WTC11 (cell line): ENCODE measurements at regions of chr11 and their contacts with region 1.

Region 1: DNA sequence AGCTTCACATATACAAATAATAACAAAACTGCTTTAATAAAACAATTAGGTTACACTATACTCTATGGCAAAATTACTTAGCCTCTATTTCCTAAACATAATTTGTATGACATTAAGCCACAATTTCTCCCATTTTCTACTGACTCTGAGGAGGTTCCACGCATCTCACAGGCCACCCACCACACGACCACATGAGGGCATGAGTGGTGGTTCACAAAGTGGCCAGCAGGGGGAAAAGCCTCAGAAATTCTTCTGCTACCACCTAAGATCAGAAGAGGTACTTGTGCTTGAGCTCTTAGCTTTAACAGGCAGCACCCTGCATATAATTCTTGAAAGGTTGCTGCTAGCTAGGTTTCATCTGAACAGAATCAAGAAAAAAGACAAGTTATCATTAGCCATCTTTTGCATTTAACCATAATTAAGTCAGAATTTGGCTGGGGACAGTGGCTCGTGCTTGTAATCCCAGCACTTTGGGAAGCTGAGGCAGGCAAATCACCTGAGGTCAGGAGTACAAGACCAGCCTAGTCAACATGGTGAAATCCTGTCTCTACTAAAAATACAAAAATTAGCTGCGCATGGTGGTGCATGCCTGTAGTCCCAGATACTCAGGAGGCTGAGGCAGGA is 7.7 kb downstream of the LPXN start:
- DNase-seq: peak; percentile 69
- ATAC-seq: peak; percentile 88
- H3K4me3 Mint-ChIP-seq: no peak overlapping the region
- H3K27ac Mint-ChIP-seq: no peak overlapping the region
- H3K4me1 Mint-ChIP-seq: no peaks in the 10 kb centered on the region
- H3K27me3 Mint-ChIP-seq: no peaks in the 10 kb centered on the region
- CTCF ChIP-seq: peak; percentile 73

Region 2: DNA sequence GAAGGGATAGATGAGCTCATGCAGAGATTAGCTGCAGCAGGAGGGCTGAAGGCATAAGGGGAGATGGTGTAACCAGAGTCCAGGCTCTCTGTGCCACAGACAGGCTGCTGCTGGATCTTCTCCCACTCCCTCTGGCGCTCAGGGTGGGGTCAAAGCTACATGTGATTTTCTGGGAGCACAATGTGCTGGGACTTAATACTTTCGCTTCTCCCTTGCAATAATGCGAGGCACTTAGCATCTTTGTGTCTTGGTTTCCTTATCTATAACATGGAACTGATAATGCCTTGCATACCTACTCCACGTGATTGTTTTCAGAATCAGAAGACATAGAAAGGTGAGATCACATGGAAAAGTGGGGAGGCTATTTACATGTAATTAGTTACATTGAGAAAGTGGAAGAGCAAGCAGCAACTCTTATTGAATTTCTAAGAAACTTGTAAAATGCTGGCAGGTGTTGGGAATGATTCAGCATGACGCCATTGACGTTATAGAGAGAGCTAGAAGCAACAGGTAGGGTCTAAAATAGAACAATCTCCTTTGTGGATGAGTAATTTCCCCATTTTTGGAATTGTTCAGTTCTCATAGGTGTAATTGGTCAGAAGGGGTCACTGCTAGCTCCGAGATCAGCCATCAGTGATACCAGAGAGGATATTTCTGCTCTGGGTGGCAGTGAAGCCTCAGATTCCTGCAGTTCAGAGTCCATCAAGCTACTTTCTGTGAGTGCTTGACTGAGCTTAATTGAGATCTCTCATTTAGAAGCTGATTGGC is 434.5 kb before region 1 on chr11:
- CTCF ChIA-PET with region 1: no interaction called
- POLR2A ChIA-PET with region 1: no interaction called
- DNase-seq: no peak
- ATAC-seq: peak; percentile 46
- H3K4me3 Mint-ChIP-seq: no peak overlapping the region
- H3K27ac Mint-ChIP-seq: no peak overlapping the region
- H3K4me1 Mint-ChIP-seq: peaks cover 4% of the 10 kb centered on the region; the same call in 1 of the 2 replicates
- H3K27me3 Mint-ChIP-seq: no peaks in the 10 kb centered on the region
- CTCF ChIP-seq: no peak

Region 3: DNA sequence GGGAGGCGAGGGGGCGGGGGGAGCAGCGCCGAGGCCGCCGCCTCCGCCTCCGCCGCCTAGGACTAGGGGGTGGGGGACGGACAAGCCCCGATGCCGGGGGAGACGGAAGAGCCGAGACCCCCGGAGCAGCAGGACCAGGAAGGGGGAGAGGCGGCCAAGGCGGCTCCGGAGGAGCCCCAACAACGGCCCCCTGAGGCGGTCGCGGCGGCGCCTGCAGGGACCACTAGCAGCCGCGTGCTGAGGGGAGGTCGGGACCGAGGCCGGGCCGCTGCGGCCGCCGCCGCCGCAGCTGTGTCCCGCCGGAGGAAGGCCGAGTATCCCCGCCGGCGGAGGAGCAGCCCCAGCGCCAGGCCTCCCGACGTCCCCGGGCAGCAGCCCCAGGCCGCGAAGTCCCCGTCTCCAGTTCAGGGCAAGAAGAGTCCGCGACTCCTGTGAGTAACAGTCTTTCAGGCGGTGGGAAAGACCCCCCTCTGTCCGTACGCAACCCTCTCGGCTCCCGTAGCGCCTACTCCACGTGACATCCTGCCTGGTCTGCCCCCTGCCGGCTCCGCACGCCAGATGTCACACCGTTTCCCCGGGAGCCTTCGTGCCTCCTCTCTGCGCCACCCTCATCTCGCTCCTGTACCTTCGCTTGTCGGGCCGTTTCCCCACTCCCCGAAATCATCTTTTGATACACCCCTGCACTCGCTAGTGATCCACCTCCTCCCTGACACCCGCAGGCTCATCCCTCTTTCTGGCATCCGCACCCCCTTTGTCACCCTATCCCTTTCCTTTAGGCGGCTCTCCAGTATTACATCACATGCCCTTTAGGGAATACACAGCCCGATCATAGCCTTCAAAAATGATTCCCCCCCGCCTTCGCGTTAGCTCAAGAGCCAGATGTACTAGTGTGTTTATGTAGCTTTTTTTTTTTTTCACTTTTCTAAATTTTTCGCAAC is 11.5 kb after region 1 on chr11:
- CTCF ChIA-PET with region 1: interaction called, 37 read pairs
- POLR2A ChIA-PET with region 1: no interaction called
- DNase-seq: peak; percentile 83
- ATAC-seq: peak; percentile 13
- H3K4me3 Mint-ChIP-seq: peak overlapping the region; percentile 96
- H3K27ac Mint-ChIP-seq: peak overlapping the region; percentile 98
- H3K4me1 Mint-ChIP-seq: peaks cover 38% of the 10 kb centered on the region
- H3K27me3 Mint-ChIP-seq: no peaks in the 10 kb centered on the region
- CTCF ChIP-seq: 0 out of 2 replicates have a peak, but pooled peaks have one; percentile 24

Region 4: DNA sequence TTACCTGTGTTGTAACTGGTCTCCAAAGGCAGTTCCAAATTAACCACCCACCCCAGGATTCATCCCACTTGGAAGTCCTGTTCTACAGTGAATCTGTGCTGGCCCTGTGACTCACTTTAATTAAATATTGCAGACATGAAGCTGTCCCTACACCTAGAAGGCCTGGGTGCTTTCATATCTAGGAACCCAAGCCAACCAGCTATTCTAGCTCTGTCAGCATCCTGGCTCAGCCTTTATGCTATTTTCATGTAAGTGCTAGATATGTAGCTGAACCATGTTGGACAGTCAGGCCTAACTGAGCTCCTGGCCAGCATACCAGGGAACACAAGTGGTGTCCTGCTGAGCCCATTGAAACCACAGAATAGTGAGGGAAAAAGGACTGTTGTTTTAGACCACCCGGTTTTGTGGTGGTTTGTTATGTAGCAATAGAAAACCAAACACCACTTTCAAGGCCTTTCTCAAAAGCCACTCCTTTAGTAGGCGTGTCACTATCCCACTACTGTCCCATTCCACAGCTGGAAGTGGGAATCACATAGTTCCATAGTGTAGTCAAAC is 84.8 kb after region 1 on chr11:
- CTCF ChIA-PET with region 1: no interaction called
- POLR2A ChIA-PET with region 1: no interaction called
- DNase-seq: no peak
- ATAC-seq: peak; percentile 15
- H3K4me3 Mint-ChIP-seq: no peak overlapping the region
- H3K27ac Mint-ChIP-seq: 0 out of 2 replicates have a peak overlapping the region, but pooled peaks have one; percentile 14
- H3K4me1 Mint-ChIP-seq: peaks cover 26% of the 10 kb centered on the region
- H3K27me3 Mint-ChIP-seq: no peaks in the 10 kb centered on the region; the same call in 1 of the 2 replicates
- CTCF ChIP-seq: no peak

Region 5: DNA sequence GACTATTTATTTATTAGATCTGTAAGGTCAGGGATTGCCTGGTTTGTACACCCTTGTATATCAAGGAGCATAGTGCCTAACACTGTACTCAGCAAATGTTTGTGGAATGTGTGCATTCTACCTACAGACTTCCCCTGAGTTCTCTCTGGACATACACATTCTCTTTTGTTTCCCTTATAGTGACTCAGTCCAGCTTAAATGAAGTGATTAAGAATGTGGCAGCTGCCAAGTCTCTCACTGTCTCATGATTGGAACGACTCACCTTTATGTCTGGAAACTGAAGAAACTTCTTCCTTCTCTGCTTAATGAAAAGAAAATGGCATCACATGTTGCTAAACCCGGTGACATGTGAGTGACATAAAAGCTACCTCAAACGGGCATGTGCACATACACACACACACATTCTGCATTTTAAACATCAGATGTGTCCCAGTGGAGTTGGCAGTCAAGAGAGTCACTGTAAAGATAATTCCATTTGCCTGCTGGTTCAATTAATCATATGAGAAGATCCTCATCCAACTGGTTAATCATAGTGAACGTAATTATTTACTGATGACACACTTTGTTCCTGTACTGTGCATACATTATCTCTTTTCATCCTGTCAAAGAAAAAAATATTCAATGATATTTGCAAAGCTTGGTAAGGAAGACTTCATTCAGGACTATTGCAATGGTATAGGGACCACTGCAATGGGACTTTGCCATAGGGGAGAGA is 120.9 kb after region 1 on chr11:
- CTCF ChIA-PET with region 1: no interaction called
- POLR2A ChIA-PET with region 1: no interaction called
- DNase-seq: no peak
- ATAC-seq: no peak
- H3K4me3 Mint-ChIP-seq: no peak overlapping the region
- H3K27ac Mint-ChIP-seq: no peak overlapping the region
- H3K4me1 Mint-ChIP-seq: no peaks in the 10 kb centered on the region
- H3K27me3 Mint-ChIP-seq: peaks cover 9% of the 10 kb centered on the region
- CTCF ChIP-seq: no peak

Region 6: DNA sequence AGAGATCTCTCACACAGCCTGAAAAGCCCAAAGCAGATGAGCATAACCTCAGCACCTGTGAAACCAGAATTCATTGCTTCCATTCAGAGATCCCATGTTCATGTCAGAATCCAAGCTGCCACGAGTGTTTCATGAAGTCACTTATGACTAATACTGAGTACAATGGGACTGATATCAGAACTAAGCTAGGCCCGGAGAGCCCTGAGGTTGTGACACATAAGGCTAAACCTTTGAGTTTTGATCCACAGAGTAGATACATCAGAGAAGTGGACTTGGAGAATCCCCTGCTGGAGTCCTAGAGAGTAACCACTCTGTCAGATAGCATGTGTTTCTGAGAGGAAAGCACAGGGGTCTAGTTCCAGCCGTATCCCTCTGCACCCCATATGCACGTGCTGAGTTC is 370.4 kb after region 1 on chr11:
- CTCF ChIA-PET with region 1: no interaction called
- POLR2A ChIA-PET with region 1: no interaction called
- DNase-seq: no peak
- ATAC-seq: no peak
- H3K4me3 Mint-ChIP-seq: no peak overlapping the region
- H3K27ac Mint-ChIP-seq: no peak overlapping the region
- H3K4me1 Mint-ChIP-seq: no peaks in the 10 kb centered on the region
- H3K27me3 Mint-ChIP-seq: no peaks in the 10 kb centered on the region
- CTCF ChIP-seq: no peak